Activated CD8-positive, alpha-beta T cell treated with anti-CD3 and anti-CD28 coated beads for 36 hours (primary cell): ENCODE measurements at regions of chr1 and their contacts with region 1.

Region 1: GRCh38 chr1:20202171-20202570 is 15.9 kb upstream of the PLA2G2C start:
- DNase-seq: no peak
- ATAC-seq: no peak
- H3K4me3 Mint-ChIP-seq: no peak overlapping the region
- H3K27ac Mint-ChIP-seq: no peak overlapping the region
- H3K4me1 Mint-ChIP-seq: no peaks in the 10 kb centered on the region
- H3K27me3 Mint-ChIP-seq: peaks cover 15% of the 10 kb centered on the region
- CTCF ChIP-seq: no peak

Region 2: DNA sequence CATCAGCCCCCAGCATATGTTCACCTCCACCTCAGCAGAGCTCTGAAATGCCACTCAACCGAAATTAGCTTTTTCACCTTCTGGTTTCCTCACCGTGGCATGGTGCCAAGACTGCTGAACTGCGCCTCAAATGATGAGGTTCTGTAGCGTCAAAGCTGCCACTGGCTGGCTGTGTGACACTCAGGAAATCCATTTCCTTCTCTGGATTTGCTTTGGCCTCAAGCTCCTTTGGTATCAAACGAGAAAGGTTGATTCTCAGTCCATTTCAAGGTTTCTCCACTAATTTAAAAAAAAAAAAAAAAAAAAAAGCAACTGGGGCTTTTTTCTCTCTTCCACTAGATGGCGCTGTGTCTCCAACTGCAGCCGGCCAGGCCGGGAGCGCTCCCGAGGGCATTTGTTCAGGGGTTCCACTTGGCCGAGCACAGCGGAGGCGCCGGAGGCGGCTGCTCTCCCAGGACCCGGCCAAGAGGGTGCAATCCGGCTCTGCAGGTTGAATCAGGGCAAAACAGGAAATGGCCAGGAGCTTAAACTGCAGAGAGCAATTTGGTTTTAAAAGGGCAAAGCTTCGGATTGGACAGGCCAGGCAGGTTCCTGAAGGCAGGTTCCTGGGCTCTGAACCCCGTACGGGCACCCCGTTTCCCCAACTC is 10.6 kb after region 1 on chr1:
- CTCF ChIA-PET with region 1: interaction called, 18 read pairs
- POLR2A ChIA-PET with region 1: no interaction called
- intact Hi-C with region 1: no loop called
- DNase-seq: peak; percentile 76
- ATAC-seq: peak; percentile 57
- H3K4me3 Mint-ChIP-seq: no peak overlapping the region
- H3K27ac Mint-ChIP-seq: no peak overlapping the region
- H3K4me1 Mint-ChIP-seq: peaks cover 19% of the 10 kb centered on the region
- H3K27me3 Mint-ChIP-seq: peaks cover 39% of the 10 kb centered on the region
- CTCF ChIP-seq: peak; percentile 88